Ovary (tissue), 10 donors: ENCODE measurements at regions of chr6 and their contacts with region 1.

Region 1: GRCh38 chr6:13711733-13712598 is at the start of gene RANBP9:
- DNase-seq: peak; percentile 86 to 91 (median 87)
- H3K4me3 ChIP-seq: peak within 1 kb of the TSS; percentile 72
- H3K27ac ChIP-seq: peak within 1 kb of the TSS; percentile 90 to 98
- H3K4me1 ChIP-seq: peaks cover 6% of the 10 kb centered on the region
- H3K27me3 ChIP-seq: no peaks in the 10 kb centered on the region
- CTCF ChIP-seq: no peak
- EP300 ChIP-seq: no peak
- POLR2A ChIP-seq: peak; percentile 42
- total RNA-seq, gene RANBP9: 26.5 to 40.8 (median 37.0) TPM

Region 2: DNA sequence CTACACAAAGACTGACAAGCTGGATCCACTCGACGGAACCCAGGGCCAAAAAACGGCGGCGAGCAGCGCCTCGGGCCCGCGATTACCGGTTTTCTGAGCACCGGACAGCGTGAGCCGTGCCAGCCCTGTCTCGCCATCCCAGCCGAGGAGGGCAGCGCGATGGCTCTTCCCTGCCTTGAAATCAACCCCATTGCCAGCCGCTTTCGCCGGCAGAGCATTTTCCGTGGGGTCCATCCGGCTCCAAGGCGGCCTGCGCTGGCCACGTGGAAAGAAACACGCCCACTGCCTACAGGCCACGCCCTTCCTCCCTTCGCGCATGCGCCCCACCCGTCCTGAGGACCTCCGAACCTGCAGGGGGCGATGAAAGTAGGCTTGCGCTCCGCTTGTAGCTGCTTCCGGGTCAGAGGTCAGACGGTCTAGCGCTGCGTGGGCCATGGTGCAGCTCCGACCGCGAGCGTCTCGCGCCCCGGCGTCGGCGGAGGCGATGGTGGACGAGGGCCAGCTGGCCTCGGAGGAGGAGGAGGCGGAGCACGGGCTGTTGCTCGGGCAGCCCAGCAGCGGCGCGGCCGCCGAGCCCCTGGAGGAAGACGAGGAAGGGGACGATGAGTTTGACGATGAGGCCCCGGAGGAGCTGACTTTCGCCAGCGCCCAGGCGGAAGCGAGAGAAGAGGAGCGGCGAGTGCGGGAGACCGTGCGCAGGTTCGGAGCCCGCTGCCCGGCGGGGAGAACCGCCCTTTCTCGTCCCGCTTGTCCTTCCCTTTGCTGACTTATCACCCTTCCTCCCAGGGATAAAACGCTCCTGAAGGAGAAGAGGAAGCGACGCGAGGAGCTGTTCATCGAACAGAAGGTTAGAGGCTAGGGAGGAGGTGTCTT is 96.8 kb before region 1 on chr6 and contains the start of gene NOL7:
- intact Hi-C with region 1: loop called (anchors 5 to 10 kb)
- DNase-seq: peak; percentile 98 to 100 (median 99)
- H3K4me3 ChIP-seq: peak within 1 kb of the TSS; percentile 98
- H3K27ac ChIP-seq: peak within 1 kb of the TSS; percentile 10 to 78
- H3K4me1 ChIP-seq: peaks cover 1% of the 10 kb centered on the region
- H3K27me3 ChIP-seq: no peaks in the 10 kb centered on the region
- CTCF ChIP-seq: peak; percentile 96 to 99 (median 98)
- EP300 ChIP-seq: no peak
- POLR2A ChIP-seq: peak; percentile 77
- total RNA-seq, gene NOL7: 49.3 to 77.7 (median 58.6) TPM

Region 3: DNA sequence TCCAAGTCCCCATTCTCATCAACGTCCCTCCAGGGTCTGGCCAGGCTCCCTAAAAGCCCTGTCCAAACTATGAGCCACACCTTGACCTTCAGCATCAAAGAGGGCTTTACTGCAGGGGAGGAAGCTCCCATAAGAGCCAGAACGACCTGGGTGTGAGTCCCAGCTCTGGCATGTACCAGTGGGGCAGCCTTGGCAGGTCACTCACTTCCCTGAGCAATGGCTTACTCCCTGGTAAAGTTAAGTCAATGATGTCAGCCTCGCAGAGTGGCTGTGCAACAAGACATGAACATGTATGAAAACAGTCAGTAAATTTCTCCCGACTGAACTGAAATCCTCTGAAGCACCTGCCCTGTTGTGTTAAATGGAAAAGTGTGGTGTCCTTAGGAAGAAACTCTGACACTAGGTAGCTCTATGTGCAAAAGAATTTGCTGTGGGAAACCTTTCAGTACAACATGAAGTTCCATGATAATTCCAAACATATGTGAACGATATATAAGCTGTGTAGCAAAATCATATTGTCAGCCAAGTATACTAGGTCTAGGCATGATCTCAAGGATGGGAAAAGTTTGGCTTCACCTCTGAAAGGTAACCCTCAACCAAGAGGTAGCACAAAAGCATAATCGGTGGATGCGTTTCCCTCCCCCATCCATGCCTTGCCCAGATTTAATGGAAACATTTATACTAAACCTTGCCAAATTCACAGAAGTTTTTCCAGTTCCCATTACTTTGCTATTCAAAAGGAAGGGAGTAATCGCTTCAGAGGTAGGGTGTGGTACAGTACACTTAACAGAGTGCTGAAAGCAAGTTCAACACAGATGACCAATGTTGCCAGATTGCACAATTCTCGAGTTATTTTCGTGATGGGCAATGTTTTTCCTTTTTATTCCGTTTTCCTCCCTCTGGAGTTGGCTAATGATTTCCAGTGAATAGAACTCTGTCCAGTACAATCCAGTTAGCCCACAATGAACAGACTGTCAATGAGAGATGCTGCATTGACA is 48.6 kb after region 1 on chr6:
- intact Hi-C with region 1: loop called in 2 of 4 experiments (anchors 2 to 5 kb)
- DNase-seq: peak in 2 of 5 donors; percentile 41 to 63
- H3K4me3 ChIP-seq: no peak overlapping the region
- H3K27ac ChIP-seq: peak overlapping the region in 1 of 2 donors; percentile 59
- H3K4me1 ChIP-seq: peaks cover 7% of the 10 kb centered on the region
- H3K27me3 ChIP-seq: no peaks in the 10 kb centered on the region
- CTCF ChIP-seq: no peak
- EP300 ChIP-seq: no peak
- POLR2A ChIP-seq: no peak